Heart left ventricle (tissue), 16 donors: ENCODE measurements at regions of chr11 and their contacts with region 1.

Region 1: DNA sequence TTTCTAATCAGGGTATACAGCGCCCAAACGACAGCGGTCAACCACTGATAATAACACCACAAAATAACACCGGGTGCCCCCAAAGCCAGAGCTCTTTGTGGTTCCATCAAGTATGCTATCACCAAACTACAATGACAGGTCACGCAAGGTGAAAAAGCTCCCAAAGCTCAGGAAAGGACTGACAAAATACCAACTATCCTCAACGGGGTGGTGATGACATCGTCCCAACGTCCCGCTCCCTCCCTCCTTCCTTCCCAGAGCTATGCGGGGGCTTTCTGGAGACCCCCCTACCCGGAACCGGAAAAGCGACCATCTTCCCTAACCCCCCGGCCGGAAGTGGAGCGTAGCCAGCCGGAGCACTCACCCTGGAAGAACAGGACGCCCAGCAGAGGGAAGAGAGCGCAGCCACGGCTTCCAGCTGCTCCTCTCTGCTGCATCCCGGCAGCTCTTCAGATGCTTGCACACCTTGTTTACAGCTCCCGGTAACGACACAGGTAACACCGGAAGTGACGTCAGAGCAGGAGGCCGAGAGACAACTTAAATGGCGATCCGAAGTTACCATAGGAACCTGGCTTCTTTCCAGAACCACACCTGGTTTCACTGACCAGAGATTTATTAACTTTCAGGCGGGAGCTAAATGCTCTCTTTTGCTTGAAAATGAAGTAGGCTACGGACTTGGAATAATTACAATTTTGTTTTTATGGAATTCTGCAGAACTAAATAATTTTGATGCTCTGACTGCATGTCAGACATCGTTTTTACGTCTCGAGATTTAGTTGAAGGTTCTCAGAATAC is at the start of gene MPZL3:
- DNase-seq: peak; percentile 71 to 84 (median 77)
- ATAC-seq: peak; percentile 61 to 89 (median 86)
- H3K4me3 ChIP-seq: peak within 1 kb of the TSS; percentile 40 to 82 (median 70)
- H3K27ac ChIP-seq: peak within 1 kb of the TSS; percentile 3 to 90 (median 66)
- H3K4me1 ChIP-seq: peaks cover 0 to 20% (median 0%) of the 10 kb centered on the region in 12 donors
- H3K27me3 ChIP-seq: peaks cover 0 to 8% (median 0%) of the 10 kb centered on the region in 9 donors
- CTCF ChIP-seq: no peak
- POLR2A ChIP-seq: no peak
- total RNA-seq, gene MPZL3: 1.3 to 6.2 (median 3.3) TPM

Region 2: GRCh38 chr11:118126082-118126838 is 125.8 kb before region 1 on chr11:
- intact Hi-C with region 1: no loop called
- DNase-seq: no peak
- ATAC-seq: no peak
- H3K4me3 ChIP-seq: no peak overlapping the region
- H3K27ac ChIP-seq: no peak overlapping the region
- H3K4me1 ChIP-seq: peaks cover 0 to 29% (median 0%) of the 10 kb centered on the region in 12 donors
- H3K27me3 ChIP-seq: no peaks in the 10 kb centered on the region
- CTCF ChIP-seq: no peak
- POLR2A ChIP-seq: no peak

Region 3: DNA sequence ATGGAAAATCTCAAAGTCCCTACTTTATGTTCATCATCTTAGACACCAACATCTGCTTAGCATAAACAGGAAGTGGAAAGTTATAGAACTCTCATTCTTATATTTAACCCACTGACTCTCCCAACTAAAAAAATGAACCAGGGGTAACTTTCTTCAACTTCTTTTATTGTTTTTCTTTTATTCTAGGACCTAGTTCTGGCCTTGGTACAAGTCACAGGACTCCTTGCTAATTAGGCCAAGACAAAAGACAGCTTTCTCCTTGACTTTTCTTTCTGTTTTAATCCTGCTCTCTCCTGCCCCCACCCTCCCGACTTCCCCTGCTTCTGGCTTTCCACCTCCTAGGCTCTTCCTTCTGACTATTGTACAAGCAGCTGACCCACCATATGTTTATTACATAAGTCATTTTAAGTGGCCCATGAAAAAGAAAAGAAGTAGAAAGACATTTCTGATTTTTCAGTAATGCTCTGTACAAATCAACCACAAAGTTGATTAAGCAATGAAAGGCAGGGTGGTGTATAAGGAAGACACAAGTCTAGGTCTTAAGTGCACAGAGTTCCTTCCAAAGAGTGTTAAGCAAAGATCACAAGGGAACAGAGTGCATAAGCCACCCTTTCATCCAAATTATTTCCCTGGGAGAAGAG is 45.5 kb before region 1 on chr11:
- intact Hi-C with region 1: loop called in 1 of 10 experiments (anchors 5 kb)
- DNase-seq: peak in 1 of 5 donors; percentile 17
- ATAC-seq: peak in 3 of 4 donors; percentile 49 to 80 (median 61)
- H3K4me3 ChIP-seq: no peak overlapping the region
- H3K27ac ChIP-seq: peak overlapping the region in 4 of 12 donors; percentile 2 to 82 (median 23)
- H3K4me1 ChIP-seq: peaks cover 0 to 87% (median 8%) of the 10 kb centered on the region in 12 donors
- H3K27me3 ChIP-seq: peaks cover 0 to 3% (median 0%) of the 10 kb centered on the region in 9 donors
- CTCF ChIP-seq: no peak
- POLR2A ChIP-seq: no peak